Naive thymus-derived CD4-positive, alpha-beta T cell (primary cell): ENCODE measurements at regions of chr2 and their contacts with region 1.

Region 1: GRCh38 chr2:10043906-10044601 is 704 bp downstream of the KLF11 start:
- DNase-seq: peak; percentile 79 to 93 (median 89)
- ATAC-seq: peak; percentile 73
- H3K4me3 ChIP-seq: peak overlapping the region; percentile 48
- H3K4me3 Mint-ChIP-seq: peak overlapping the region; percentile 76 to 89 (median 84)
- H3K27ac ChIP-seq: peak overlapping the region; percentile 76
- H3K27ac Mint-ChIP-seq: peak overlapping the region; percentile 82 to 95 (median 88)
- H3K4me1 ChIP-seq: peaks cover 6% of the 10 kb centered on the region in 2 donors
- H3K4me1 Mint-ChIP-seq: peaks cover 14 to 35% (median 29%) of the 10 kb centered on the region in 7 donors
- H3K27me3 ChIP-seq: no peaks in the 10 kb centered on the region
- H3K27me3 Mint-ChIP-seq: peaks cover 0 to 31% (median 0%) of the 10 kb centered on the region in 5 donors

Region 2: GRCh38 chr2:9142551-9143263 is 901.3 kb before region 1 on chr2:
- CTCF ChIA-PET with region 1: no interaction called
- POLR2A ChIA-PET with region 1: no interaction called
- intact Hi-C with region 1: loop called in 1 of 2 experiments (anchors 2 kb)
- DNase-seq: peak; percentile 32 to 90 (median 69)
- ATAC-seq: peak; percentile 94
- H3K4me3 ChIP-seq: no peak overlapping the region
- H3K4me3 Mint-ChIP-seq: peak overlapping the region in 7 of 10 donors; percentile 12 to 57 (median 36)
- H3K27ac ChIP-seq: no peak overlapping the region
- H3K27ac Mint-ChIP-seq: no peak overlapping the region
- H3K4me1 ChIP-seq: no peaks in the 10 kb centered on the region
- H3K4me1 Mint-ChIP-seq: peaks cover 0 to 5% (median 0%) of the 10 kb centered on the region in 7 donors
- H3K27me3 ChIP-seq: no peaks in the 10 kb centered on the region
- H3K27me3 Mint-ChIP-seq: peaks cover 1 to 27% (median 14%) of the 10 kb centered on the region in 5 donors

Region 3: GRCh38 chr2:9474361-9474967 is 569.6 kb before region 1 on chr2 and contains the start of gene IAH1:
- CTCF ChIA-PET with region 1: no interaction called
- POLR2A ChIA-PET with region 1: no interaction called
- intact Hi-C with region 1: loop called in 1 of 2 experiments (anchors 5 kb)
- DNase-seq: peak in 8 of 9 donors; percentile 66 to 81 (median 78)
- ATAC-seq: peak; percentile 89
- H3K4me3 ChIP-seq: peak within 1 kb of the TSS; percentile 82
- H3K4me3 Mint-ChIP-seq: peak within 1 kb of the TSS; percentile 81 to 89 (median 84)
- H3K27ac ChIP-seq: peak within 1 kb of the TSS; percentile 95
- H3K27ac Mint-ChIP-seq: peak within 1 kb of the TSS; percentile 83 to 95 (median 88)
- H3K4me1 ChIP-seq: peaks cover 11 to 21% of the 10 kb centered on the region in 2 donors
- H3K4me1 Mint-ChIP-seq: peaks cover 20 to 53% (median 45%) of the 10 kb centered on the region in 7 donors
- H3K27me3 ChIP-seq: no peaks in the 10 kb centered on the region
- H3K27me3 Mint-ChIP-seq: no peaks in the 10 kb centered on the region
- total RNA-seq, gene IAH1: 43.9 to 62.7 (median 49.7) TPM

Region 4: GRCh38 chr2:9813312-9814133 is 230.5 kb before region 1 on chr2:
- CTCF ChIA-PET with region 1: interaction called, 77 read pairs
- POLR2A ChIA-PET with region 1: interaction called, 3 read pairs
- intact Hi-C with region 1: loop called in 1 of 2 experiments (anchors 1 kb)
- DNase-seq: peak; percentile 26 to 76 (median 61)
- ATAC-seq: peak; percentile 89
- H3K4me3 ChIP-seq: no peak overlapping the region
- H3K4me3 Mint-ChIP-seq: peak overlapping the region in 1 of 10 donors; percentile 54
- H3K27ac ChIP-seq: no peak overlapping the region
- H3K27ac Mint-ChIP-seq: peak overlapping the region in 1 of 9 donors; percentile 67
- H3K4me1 ChIP-seq: peaks cover 6% of the 10 kb centered on the region in 2 donors
- H3K4me1 Mint-ChIP-seq: peaks cover 9 to 20% (median 17%) of the 10 kb centered on the region in 7 donors
- H3K27me3 ChIP-seq: no peaks in the 10 kb centered on the region
- H3K27me3 Mint-ChIP-seq: peaks cover 0 to 10% (median 6%) of the 10 kb centered on the region in 5 donors

Region 5: GRCh38 chr2:9951272-9951972 is 92.6 kb before region 1 on chr2 and contains the start of gene GRHL1:
- CTCF ChIA-PET with region 1: no interaction called
- POLR2A ChIA-PET with region 1: no interaction called
- intact Hi-C with region 1: loop called (anchors 1 kb)
- DNase-seq: peak; percentile 82 to 95 (median 90)
- ATAC-seq: peak; percentile 97
- H3K4me3 ChIP-seq: peak within 1 kb of the TSS; percentile 57
- H3K4me3 Mint-ChIP-seq: peak within 1 kb of the TSS; percentile 70 to 90 (median 86)
- H3K27ac ChIP-seq: peak within 1 kb of the TSS; percentile 63
- H3K27ac Mint-ChIP-seq: peak within 1 kb of the TSS in 7 of 9 donors; percentile 15 to 77 (median 56)
- H3K4me1 ChIP-seq: no peaks in the 10 kb centered on the region
- H3K4me1 Mint-ChIP-seq: peaks cover 0 to 13% (median 8%) of the 10 kb centered on the region in 7 donors
- H3K27me3 ChIP-seq: no peaks in the 10 kb centered on the region
- H3K27me3 Mint-ChIP-seq: peaks cover 19 to 77% (median 39%) of the 10 kb centered on the region in 5 donors
- total RNA-seq, gene GRHL1: 0.19 to 1.3 (median 0.56) TPM

Region 6: GRCh38 chr2:10028988-10029874 is 14.8 kb before region 1 on chr2:
- CTCF ChIA-PET with region 1: interaction called, 3 read pairs
- POLR2A ChIA-PET with region 1: interaction called, 7 read pairs
- intact Hi-C with region 1: loop called (anchors 1 kb)
- DNase-seq: peak in 8 of 9 donors; percentile 26 to 58 (median 36)
- ATAC-seq: peak; percentile 96
- H3K4me3 ChIP-seq: peak overlapping the region; percentile 31
- H3K4me3 Mint-ChIP-seq: peak overlapping the region; percentile 16 to 73 (median 66)
- H3K27ac ChIP-seq: peak overlapping the region; percentile 4
- H3K27ac Mint-ChIP-seq: peak overlapping the region in 7 of 9 donors; percentile 28 to 86 (median 71)
- H3K4me1 ChIP-seq: peaks cover 21 to 23% of the 10 kb centered on the region in 2 donors
- H3K4me1 Mint-ChIP-seq: peaks cover 16 to 28% (median 21%) of the 10 kb centered on the region in 7 donors
- H3K27me3 ChIP-seq: no peaks in the 10 kb centered on the region
- H3K27me3 Mint-ChIP-seq: peaks cover 0 to 3% (median 0%) of the 10 kb centered on the region in 5 donors

Region 7: GRCh38 chr2:10911261-10912075 is 867.4 kb after region 1 on chr2 and contains the start of gene KCNF1:
- CTCF ChIA-PET with region 1: no interaction called
- POLR2A ChIA-PET with region 1: no interaction called
- intact Hi-C with region 1: no loop called
- DNase-seq: no peak
- ATAC-seq: no peak
- H3K4me3 ChIP-seq: no peak within 1 kb of the TSS
- H3K4me3 Mint-ChIP-seq: peak within 1 kb of the TSS in 8 of 10 donors; percentile 8 to 81 (median 48)
- H3K27ac ChIP-seq: no peak within 1 kb of the TSS
- H3K27ac Mint-ChIP-seq: peak within 1 kb of the TSS in 1 of 9 donors; percentile 1
- H3K4me1 ChIP-seq: no peaks in the 10 kb centered on the region
- H3K4me1 Mint-ChIP-seq: peaks cover 0 to 20% (median 5%) of the 10 kb centered on the region in 7 donors
- H3K27me3 ChIP-seq: no peaks in the 10 kb centered on the region
- H3K27me3 Mint-ChIP-seq: peaks cover 36 to 46% (median 42%) of the 10 kb centered on the region in 5 donors
- total RNA-seq, gene KCNF1: not detected

Region 8: GRCh38 chr2:11539317-11540152 is 1495.5 kb after region 1 on chr2:
- CTCF ChIA-PET with region 1: no interaction called
- POLR2A ChIA-PET with region 1: no interaction called
- intact Hi-C with region 1: no loop called
- DNase-seq: no peak
- ATAC-seq: no peak
- H3K4me3 ChIP-seq: no peak overlapping the region
- H3K4me3 Mint-ChIP-seq: no peak overlapping the region
- H3K27ac ChIP-seq: no peak overlapping the region
- H3K27ac Mint-ChIP-seq: no peak overlapping the region
- H3K4me1 ChIP-seq: no peaks in the 10 kb centered on the region
- H3K4me1 Mint-ChIP-seq: no peaks in the 10 kb centered on the region
- H3K27me3 ChIP-seq: no peaks in the 10 kb centered on the region
- H3K27me3 Mint-ChIP-seq: peaks cover 16 to 57% (median 45%) of the 10 kb centered on the region in 5 donors